ENCODE measurements at regions of chr1 and their contacts with region 1.

Region 1: GRCh38 chr1:1206376-1207260 is at the start of gene TNFRSF18:
- DNase-seq: peak; percentile 79
- ATAC-seq: peak; percentile 71
- H3K4me3 ChIP-seq: peak within 1 kb of the TSS; percentile 68
- H3K27ac ChIP-seq: no peak within 1 kb of the TSS
- H3K4me1 ChIP-seq: peaks cover 25% of the 10 kb centered on the region
- H3K27me3 ChIP-seq: no peaks in the 10 kb centered on the region
- CTCF ChIP-seq: peak; percentile 31; the same call in 1 of the 2 replicates
- total RNA-seq, gene TNFRSF18: 87.2 and 120 TPM in 2 replicates

Region 2: DNA sequence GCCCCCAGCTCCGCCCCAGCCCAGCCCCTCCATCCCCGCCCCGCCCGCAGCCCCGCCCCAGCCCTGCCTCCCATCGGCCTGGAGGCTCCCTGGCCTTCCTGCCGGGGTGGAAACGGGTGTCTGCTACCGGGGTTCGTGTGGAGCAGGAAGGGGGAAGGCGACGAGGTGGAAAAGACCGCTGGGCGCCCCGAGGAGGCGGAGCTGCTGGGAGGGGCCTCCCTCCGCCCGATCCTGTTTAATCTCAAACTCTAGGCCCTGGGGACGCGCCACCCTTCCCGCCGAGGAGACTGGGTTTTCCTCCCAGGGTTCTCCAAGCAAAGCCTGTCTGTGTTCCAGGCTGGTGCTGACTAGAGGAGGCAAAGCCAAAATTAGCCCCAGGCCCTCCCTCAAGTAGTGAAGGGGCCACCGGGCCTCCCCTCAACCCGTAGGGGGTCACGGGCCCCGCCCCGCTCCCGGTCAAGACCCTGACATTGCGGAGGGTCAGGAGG is 49.1 kb before region 1 on chr1:
- CTCF ChIA-PET with region 1: no interaction called
- POLR2A ChIA-PET with region 1: interaction called, 13 read pairs
- intact Hi-C with region 1: no loop called
- DNase-seq: peak; percentile 92
- ATAC-seq: peak; percentile 79
- H3K4me3 ChIP-seq: peak overlapping the region; percentile 71
- H3K27ac ChIP-seq: peak overlapping the region; percentile 92
- H3K4me1 ChIP-seq: peaks cover 19% of the 10 kb centered on the region
- H3K27me3 ChIP-seq: no peaks in the 10 kb centered on the region
- CTCF ChIP-seq: no peak